ENCODE measurements at regions of chr17 and their contacts with region 1.

Region 1: DNA sequence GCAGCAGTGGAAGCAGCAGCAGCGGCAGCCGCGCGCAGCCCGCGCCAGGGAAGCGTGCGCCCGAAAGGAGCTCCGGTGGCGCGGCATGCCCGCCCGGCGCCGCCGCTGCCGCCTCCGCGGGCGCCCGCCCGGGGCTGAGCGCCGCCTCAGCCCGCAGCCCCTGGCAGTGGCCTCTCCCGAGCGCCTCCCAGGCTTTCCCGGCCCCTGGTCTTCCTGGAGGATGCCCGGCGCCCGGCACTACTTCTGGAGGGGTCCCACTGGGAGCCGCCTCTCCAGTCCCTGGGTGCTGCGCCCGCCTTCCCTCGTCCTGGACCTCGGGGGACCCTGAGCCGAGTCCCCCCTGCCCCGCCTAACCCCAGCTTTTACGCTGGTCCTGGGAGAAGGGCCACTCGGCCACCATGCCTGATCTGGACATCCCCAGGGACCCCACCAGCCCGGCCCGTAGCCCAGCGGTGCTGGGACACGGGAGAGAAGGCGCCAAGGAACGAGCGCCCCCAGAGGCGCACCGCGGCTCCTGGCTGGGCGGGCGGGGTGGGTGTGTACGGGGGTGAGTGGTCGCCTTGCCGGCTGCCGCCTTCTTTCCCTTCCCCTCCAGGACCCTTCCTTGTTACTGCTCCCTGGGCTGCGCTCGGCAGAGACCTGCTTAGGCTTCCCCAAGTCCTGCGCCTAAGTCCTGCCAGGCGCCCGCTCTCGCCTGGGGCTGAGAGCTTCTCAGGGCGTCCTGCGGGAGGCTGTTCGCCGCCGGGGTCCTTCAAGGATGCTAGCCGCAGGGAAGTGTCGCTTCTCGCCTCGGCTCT is 713 bp downstream of the ASIC2 start:
- DNase-seq: peak; percentile 21 to 78
- H3K4me3 ChIP-seq: peak overlapping the region; percentile 26 to 68 (median 52)
- H3K27ac ChIP-seq: no peak overlapping the region
- H3K4me1 ChIP-seq: peaks cover 0 to 6% (median 2%) of the 10 kb centered on the region in 4 experiments; a peak in 1 of 7 replicates
- H3K27me3 ChIP-seq: peaks cover 25 to 70% (median 62%) of the 10 kb centered on the region in 4 experiments
- CTCF ChIP-seq: peak; percentile 38 to 63 (median 52)
- EP300 ChIP-seq: no peak
- POLR2A ChIP-seq: no peak
- RAD21 ChIP-seq: peak; percentile 22 to 51; a peak in 2 of 4 replicates

Region 2: DNA sequence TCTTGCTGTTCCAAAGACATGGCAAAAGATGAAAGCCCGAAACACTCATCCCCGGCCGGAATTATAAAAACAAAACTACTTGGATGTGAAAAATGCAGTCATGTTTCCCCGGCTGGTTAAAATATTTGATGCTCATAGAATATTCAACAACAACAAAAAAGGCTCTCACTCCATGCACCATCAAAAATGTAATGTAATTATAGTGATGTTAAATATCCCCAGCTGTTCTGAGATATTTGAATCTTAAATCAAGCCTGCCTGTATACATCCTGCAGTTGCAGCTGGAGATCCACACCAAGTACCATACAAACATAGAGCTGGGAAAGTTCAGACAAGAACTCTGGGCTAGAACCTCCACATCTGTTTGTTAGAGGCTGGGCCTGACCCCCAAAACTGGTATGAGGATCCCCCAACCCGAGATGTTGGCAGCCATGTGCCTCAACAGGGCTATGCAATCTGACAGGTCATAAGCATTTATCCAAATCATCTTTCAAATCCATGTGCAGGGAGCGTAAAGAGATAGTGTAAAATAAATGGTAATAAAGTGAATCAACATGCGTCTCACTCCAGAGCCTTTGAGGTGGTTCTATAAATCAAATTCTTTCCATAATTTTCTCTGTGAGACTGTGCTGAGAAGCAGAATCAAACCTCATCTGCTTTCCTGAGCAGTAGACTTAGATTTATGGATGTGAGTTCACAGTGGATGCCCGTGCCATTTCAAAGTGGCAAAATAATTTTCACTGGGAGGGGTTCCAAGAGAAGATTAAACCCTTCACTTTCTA is 12.0 kb before region 1 on chr17:
- CTCF ChIA-PET with region 1: interaction called, 11 read pairs
- POLR2A ChIA-PET with region 1: no interaction called
- DNase-seq: no peak
- H3K4me3 ChIP-seq: no peak overlapping the region
- H3K27ac ChIP-seq: no peak overlapping the region
- H3K4me1 ChIP-seq: no peaks in the 10 kb centered on the region
- H3K27me3 ChIP-seq: peaks cover 0 to 2% (median 0%) of the 10 kb centered on the region in 4 experiments; a peak in 2 of 7 replicates
- CTCF ChIP-seq: no peak
- EP300 ChIP-seq: no peak
- POLR2A ChIP-seq: no peak
- RAD21 ChIP-seq: no peak

Region 3: GRCh38 chr17:33389504-33390135 is 97.2 kb after region 1 on chr17:
- CTCF ChIA-PET with region 1: no interaction called
- POLR2A ChIA-PET with region 1: no interaction called
- DNase-seq: no peak
- H3K4me3 ChIP-seq: no peak overlapping the region
- H3K27ac ChIP-seq: no peak overlapping the region
- H3K4me1 ChIP-seq: 0 out of 7 replicates have a peak, but pooled peaks cover 0 to 2% (median 0%) of the 10 kb centered on the region in 4 experiments
- H3K27me3 ChIP-seq: no peaks in the 10 kb centered on the region
- CTCF ChIP-seq: no peak
- EP300 ChIP-seq: no peak
- POLR2A ChIP-seq: no peak
- RAD21 ChIP-seq: no peak

Measured in H1 (cell line).